Dendritic cell treated with granulocyte-macrophage colony-stimulating factor and Interleukin-4, amounts not matched to agents 40 ng/mL and 50 ng/mL, for 4 days (primary cell): ENCODE measurements at regions of chr16 and their contacts with region 1.

Region 1: GRCh38 chr16:3007957-3008693 is 4.6 kb upstream of the CLDN9 start:
- H3K4me3 Mint-ChIP-seq: peak overlapping the region; percentile 72
- H3K27ac Mint-ChIP-seq: peak overlapping the region; percentile 81
- H3K4me1 Mint-ChIP-seq: peaks cover 48% of the 10 kb centered on the region
- H3K27me3 Mint-ChIP-seq: peaks cover 27% of the 10 kb centered on the region

Region 2: GRCh38 chr16:3020169-3020736 is 12.1 kb after region 1 on chr16 and contains the start of gene TNFRSF12A:
- intact Hi-C with region 1: loop called (anchors 1 kb)
- H3K4me3 Mint-ChIP-seq: peak within 1 kb of the TSS; percentile 81
- H3K27ac Mint-ChIP-seq: peak within 1 kb of the TSS; percentile 90
- H3K4me1 Mint-ChIP-seq: peaks cover 61% of the 10 kb centered on the region
- H3K27me3 Mint-ChIP-seq: peaks cover 37% of the 10 kb centered on the region

Region 3: GRCh38 chr16:3065069-3065741 is 57.1 kb after region 1 on chr16 and contains the start of gene IL32:
- intact Hi-C with region 1: no loop called
- H3K4me3 Mint-ChIP-seq: peak within 1 kb of the TSS; percentile 44
- H3K27ac Mint-ChIP-seq: peak within 1 kb of the TSS; percentile 39
- H3K4me1 Mint-ChIP-seq: peaks cover 42% of the 10 kb centered on the region
- H3K27me3 Mint-ChIP-seq: peaks cover 2% of the 10 kb centered on the region

Region 4: GRCh38 chr16:3256146-3256865 is 248.2 kb after region 1 on chr16 and contains the start of gene MEFV:
- intact Hi-C with region 1: no loop called
- H3K4me3 Mint-ChIP-seq: peak within 1 kb of the TSS; percentile 67
- H3K27ac Mint-ChIP-seq: peak within 1 kb of the TSS; percentile 76
- H3K4me1 Mint-ChIP-seq: peaks cover 68% of the 10 kb centered on the region
- H3K27me3 Mint-ChIP-seq: no peaks in the 10 kb centered on the region

Region 5: DNA sequence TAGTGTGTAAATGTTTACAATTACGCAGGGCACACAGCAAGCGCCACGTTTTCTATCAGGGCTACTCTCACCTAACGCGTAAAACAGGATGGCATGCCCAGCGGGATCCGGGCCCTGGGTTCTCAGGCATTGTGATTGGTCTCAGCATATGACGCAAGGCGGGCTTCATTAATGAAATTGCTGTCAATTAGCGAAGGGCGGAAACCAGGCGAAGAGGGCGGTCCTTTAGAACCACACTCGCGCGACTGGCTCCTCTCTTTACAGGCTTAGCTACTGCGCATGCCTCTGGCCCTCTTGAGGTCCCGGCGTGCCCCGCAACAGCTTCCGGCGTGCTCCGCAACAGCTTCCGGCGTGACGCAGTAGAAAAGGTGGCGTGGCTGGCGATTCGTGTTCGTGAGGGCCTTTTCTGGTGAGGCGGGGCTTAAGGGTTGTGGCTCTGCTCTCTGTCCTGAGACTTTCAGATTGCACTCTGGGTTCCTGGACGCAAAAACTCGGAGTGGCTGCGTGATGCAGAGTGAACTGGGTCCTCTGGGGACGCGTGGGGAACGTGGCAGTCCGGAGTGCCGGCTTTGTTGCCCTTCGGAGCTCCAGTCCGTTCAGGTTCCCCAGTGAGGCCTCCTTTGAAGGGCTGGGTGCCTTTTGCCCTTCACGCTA is 356.8 kb after region 1 on chr16:
- intact Hi-C with region 1: no loop called
- H3K4me3 Mint-ChIP-seq: peak overlapping the region; percentile 61
- H3K27ac Mint-ChIP-seq: no peak overlapping the region
- H3K4me1 Mint-ChIP-seq: no peaks in the 10 kb centered on the region
- H3K27me3 Mint-ChIP-seq: peaks cover 32% of the 10 kb centered on the region